Heart left ventricle (tissue), 16 donors: ENCODE measurements at regions of chr18 and their contacts with region 1.

Region 1: GRCh38 chr18:59189746-59190145 is 30.2 kb upstream of the GRP start:
- DNase-seq: no peak
- ATAC-seq: no peak
- H3K4me3 ChIP-seq: no peak overlapping the region
- H3K27ac ChIP-seq: no peak overlapping the region
- H3K4me1 ChIP-seq: no peaks in the 10 kb centered on the region
- H3K27me3 ChIP-seq: no peaks in the 10 kb centered on the region
- CTCF ChIP-seq: no peak
- POLR2A ChIP-seq: no peak

Region 2: GRCh38 chr18:59109375-59109774 is 80.4 kb before region 1 on chr18:
- intact Hi-C with region 1: loop called in 1 of 10 experiments (anchors 10 kb)
- DNase-seq: no peak
- ATAC-seq: no peak
- H3K4me3 ChIP-seq: no peak overlapping the region
- H3K27ac ChIP-seq: no peak overlapping the region
- H3K4me1 ChIP-seq: no peaks in the 10 kb centered on the region
- H3K27me3 ChIP-seq: peaks cover 0 to 69% (median 10%) of the 10 kb centered on the region in 9 donors
- CTCF ChIP-seq: no peak
- POLR2A ChIP-seq: no peak

Region 3: DNA sequence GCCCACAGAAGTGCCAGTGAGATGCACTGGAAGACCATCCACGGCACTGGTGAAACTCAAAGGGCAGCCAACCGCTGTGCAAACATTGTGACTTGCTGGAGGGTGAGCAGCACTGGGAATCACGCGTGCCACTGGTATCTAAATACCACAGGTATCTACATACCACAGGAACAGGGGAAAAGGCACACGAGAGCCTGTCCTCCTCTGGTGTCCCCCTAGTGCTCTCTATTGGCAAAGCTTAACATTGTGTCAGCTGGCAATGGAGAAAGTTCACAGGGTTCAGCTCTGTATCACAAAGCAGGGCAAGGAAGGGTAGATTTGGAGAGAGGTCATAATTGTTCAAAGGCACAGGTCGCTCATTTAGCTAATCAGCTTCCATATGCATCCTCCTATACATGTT is 62.7 kb before region 1 on chr18:
- intact Hi-C with region 1: no loop called
- DNase-seq: no peak
- ATAC-seq: no peak
- H3K4me3 ChIP-seq: no peak overlapping the region
- H3K27ac ChIP-seq: no peak overlapping the region
- H3K4me1 ChIP-seq: no peaks in the 10 kb centered on the region
- H3K27me3 ChIP-seq: peaks cover 0 to 46% (median 5%) of the 10 kb centered on the region in 9 donors
- CTCF ChIP-seq: no peak
- POLR2A ChIP-seq: no peak